Sigmoid colon (tissue), 7 donors: ENCODE measurements at regions of chr11 and their contacts with region 1.

Region 1: GRCh38 chr11:44095506-44096394 is at the start of gene EXT2:
- DNase-seq: peak; percentile 94
- H3K4me3 ChIP-seq: peak within 1 kb of the TSS; percentile 61 to 93 (median 70)
- H3K27ac ChIP-seq: peak within 1 kb of the TSS; percentile 76 to 83 (median 80)
- H3K4me1 ChIP-seq: peaks cover 0 to 21% (median 14%) of the 10 kb centered on the region in 4 donors
- H3K27me3 ChIP-seq: no peaks in the 10 kb centered on the region
- CTCF ChIP-seq: peak; percentile 64 to 91 (median 80)
- EP300 ChIP-seq: no peak
- POLR2A ChIP-seq: no peak
- total RNA-seq, gene EXT2: 46.3 to 68.1 (median 61.2) TPM

Region 2: DNA sequence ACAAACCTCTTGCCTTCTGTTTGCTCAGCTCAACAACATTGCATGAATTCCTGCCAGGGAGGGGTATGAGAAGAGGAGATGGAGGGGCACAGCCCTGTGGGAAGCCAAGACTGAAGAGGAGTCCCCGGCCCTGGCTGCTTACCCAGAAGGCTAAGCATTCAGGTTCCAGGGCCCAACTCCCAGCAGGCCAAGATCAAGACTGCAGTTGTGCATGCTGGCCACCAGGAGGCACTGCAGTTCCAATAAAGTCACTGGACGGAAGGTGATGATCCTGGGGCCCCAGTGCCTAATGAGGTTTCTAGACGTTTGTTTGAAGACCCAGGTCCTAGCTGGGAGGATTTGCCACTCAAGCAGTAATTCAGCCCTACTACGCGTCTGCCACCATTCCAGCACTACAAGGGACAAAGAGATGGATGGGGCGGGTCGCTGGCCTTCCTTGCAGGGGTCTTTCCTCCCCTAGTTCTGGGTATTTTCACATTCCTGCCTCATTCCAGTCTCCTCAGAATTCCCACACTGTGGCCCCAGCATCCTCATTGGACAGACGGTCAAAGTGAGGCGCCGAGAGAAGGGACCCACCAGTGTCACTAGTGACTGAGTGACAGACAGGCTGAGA is 190.6 kb after region 1 on chr11:
- intact Hi-C with region 1: loop called (anchors 10 kb)
- DNase-seq: no peak
- H3K4me3 ChIP-seq: no peak overlapping the region
- H3K27ac ChIP-seq: no peak overlapping the region
- H3K4me1 ChIP-seq: peaks cover 0 to 4% (median 0%) of the 10 kb centered on the region in 4 donors
- H3K27me3 ChIP-seq: peaks cover 0 to 5% (median 0%) of the 10 kb centered on the region in 3 donors
- CTCF ChIP-seq: peak; percentile 61 to 95 (median 92)
- EP300 ChIP-seq: no peak
- POLR2A ChIP-seq: no peak

Region 3: DNA sequence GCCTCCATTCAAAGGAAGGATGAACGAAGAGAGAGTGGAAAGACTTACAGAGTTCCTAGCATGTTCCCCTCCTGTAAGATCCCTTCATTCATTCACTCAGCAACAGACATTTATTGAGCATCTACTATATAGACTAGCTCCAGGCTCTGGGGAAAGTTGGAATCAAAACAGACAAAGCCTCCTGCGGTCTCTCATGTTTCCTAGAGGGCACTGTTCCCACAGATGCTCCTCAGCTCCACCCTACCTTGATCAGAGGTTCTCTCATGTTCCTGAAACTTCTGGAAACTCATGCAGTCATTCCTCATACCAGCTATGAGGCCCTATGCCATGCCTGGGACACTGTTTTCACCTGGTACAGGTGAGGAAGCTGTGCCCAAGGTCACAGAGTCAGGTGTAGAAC is 203.1 kb after region 1 on chr11:
- intact Hi-C with region 1: no loop called
- DNase-seq: no peak
- H3K4me3 ChIP-seq: no peak overlapping the region
- H3K27ac ChIP-seq: no peak overlapping the region
- H3K4me1 ChIP-seq: no peaks in the 10 kb centered on the region
- H3K27me3 ChIP-seq: peaks cover 21 to 44% (median 22%) of the 10 kb centered on the region in 3 donors
- CTCF ChIP-seq: no peak
- EP300 ChIP-seq: no peak
- POLR2A ChIP-seq: no peak

Region 4: GRCh38 chr11:44538375-44539054 is 442.8 kb after region 1 on chr11:
- intact Hi-C with region 1: loop called (anchors 1 kb)
- DNase-seq: peak; percentile 86
- H3K4me3 ChIP-seq: no peak overlapping the region
- H3K27ac ChIP-seq: no peak overlapping the region
- H3K4me1 ChIP-seq: no peaks in the 10 kb centered on the region
- H3K27me3 ChIP-seq: peaks cover 0 to 3% (median 0%) of the 10 kb centered on the region in 3 donors
- CTCF ChIP-seq: peak; percentile 85 to 97 (median 94)
- EP300 ChIP-seq: no peak
- POLR2A ChIP-seq: no peak

Region 5: DNA sequence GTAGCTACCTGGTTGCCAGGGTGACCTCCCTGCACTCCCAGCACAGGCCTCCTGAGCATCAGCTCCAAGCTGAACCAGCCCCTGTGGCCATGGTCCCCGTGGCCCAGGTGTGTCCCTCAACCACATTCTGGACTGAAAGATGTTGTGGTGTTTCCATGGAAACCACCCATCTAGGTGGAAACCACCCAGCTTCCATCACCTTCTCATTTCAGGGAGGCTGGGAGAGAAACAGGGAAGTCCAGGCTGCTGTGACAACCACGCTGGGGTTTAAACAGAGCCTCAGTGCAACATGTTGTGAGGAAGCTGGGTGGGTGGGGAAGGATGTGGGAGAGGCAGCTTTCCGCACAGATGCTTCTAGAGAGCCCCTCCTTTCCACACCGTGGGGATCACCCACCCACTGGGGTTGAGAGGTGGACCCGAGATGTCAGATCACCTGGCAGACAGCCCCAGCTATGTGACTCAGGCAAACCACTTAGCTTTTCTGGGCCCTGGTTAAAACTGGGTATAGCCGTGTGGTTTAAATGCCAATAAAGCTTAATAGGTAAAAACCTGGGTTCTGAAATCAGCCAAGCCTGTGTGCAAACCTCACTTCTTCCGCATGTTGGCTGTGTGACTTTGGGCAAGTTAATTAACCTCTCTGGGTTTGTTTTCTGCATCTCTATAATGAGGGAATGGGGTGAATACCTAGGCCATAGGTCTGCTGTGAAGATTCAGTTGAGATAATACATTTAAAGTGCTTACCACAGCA is 516.1 kb after region 1 on chr11:
- intact Hi-C with region 1: loop called (anchors 10 kb)
- DNase-seq: no peak
- H3K4me3 ChIP-seq: no peak overlapping the region
- H3K27ac ChIP-seq: no peak overlapping the region
- H3K4me1 ChIP-seq: peaks cover 0 to 46% (median 29%) of the 10 kb centered on the region in 4 donors
- H3K27me3 ChIP-seq: no peaks in the 10 kb centered on the region
- CTCF ChIP-seq: no peak
- EP300 ChIP-seq: no peak
- POLR2A ChIP-seq: no peak

Region 6: DNA sequence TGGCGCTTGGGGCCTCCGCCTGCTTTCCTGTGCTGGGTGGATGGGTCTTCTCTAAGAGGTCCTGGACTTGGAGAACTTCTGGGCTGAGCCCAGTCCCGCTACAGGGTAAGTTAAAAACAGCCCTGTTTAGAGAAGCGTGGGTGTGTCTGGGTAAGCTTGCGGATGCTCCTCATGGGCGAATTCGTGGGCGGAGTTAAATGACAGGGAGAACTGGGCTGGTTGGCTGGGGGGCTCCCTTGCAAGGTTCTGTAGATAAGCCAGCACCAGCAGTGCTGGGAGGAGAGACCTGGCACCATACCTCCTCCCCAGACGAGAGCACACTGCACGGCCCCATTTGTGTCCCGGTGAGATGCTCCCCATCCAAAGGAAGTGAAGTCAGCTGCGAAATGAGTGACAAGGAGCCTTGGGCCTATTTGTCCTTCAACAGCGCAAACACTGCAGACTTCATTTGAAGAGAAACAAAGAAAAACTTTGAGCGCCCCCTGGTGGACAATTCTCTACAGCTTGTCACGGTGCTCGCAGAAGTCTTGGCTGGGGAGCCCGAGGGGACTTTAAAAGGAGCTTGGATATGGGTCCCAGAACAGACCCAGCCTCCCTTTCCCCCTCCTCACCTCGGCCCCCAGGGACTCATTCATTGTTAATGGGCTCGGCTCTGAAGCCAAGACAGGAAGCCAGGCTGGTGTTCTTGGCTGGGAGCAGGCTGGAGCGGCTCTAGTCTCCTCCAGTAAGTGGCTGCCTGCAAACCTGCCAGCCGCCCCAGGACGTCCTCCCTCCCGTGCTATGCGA is 815.5 kb after region 1 on chr11:
- intact Hi-C with region 1: loop called (anchors 10 kb)
- DNase-seq: peak; percentile 92
- H3K4me3 ChIP-seq: no peak overlapping the region
- H3K27ac ChIP-seq: peak overlapping the region in 2 of 4 donors; percentile 11 to 49
- H3K4me1 ChIP-seq: peaks cover 0 to 16% (median 15%) of the 10 kb centered on the region in 4 donors
- H3K27me3 ChIP-seq: no peaks in the 10 kb centered on the region
- CTCF ChIP-seq: peak; percentile 71 to 87 (median 82)
- EP300 ChIP-seq: no peak
- POLR2A ChIP-seq: no peak